ENCODE measurements at regions of chr4 and their contacts with region 1.

Region 1: DNA sequence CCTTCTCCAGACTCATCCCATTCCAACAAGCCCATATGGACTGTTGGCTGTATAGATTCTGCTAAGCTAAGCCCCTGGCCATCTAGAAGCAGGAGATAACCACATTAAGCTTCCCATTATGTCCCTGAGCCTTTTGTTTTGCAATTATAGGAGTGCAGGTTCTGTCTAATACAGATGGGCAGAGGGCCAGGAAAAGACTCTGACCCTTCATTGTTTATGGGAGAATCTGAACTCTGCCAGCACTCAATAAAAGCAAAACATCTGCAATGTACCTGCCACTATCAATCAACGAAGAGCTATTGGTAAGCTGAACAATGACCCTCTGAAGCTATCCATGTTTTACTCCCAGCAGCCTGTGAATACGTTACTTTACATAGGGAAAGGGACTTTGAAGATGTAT is 207.3 kb upstream of the CLNK start:
- DNase-seq: no peak
- ATAC-seq: no peak
- H3K4me3 ChIP-seq: no peak overlapping the region
- H3K4me3 Mint-ChIP-seq: no peak overlapping the region
- H3K27ac ChIP-seq: no peak overlapping the region
- H3K27ac Mint-ChIP-seq: no peak overlapping the region
- H3K4me1 ChIP-seq: no peaks in the 10 kb centered on the region
- H3K4me1 Mint-ChIP-seq: peaks cover 0 to 10% (median 3%) of the 10 kb centered on the region in 3 donors
- H3K27me3 ChIP-seq: no peaks in the 10 kb centered on the region
- H3K27me3 Mint-ChIP-seq: peaks cover 0 to 5% of the 10 kb centered on the region in 2 donors

Region 2: DNA sequence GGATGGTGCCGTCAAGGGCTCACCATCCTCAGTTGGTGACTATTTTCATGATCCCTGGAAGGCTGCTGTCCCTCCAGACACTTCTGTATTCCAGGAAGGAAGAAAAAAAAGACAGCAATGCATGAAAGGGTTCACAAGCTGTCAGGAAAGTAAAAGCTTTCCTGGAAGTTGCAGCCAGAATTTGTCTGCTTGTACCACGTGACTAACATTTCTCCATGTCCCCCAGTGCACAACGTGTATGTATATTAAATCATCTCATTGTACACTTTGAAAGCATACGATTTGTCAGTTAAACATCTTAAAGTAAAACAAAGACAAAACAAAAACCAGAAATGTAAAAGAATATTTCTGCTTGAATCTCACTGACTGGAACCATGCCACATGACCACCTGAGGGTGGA is 79.9 kb before region 1 on chr4:
- CTCF ChIA-PET with region 1: no interaction called
- POLR2A ChIA-PET with region 1: no interaction called
- DNase-seq: no peak
- ATAC-seq: no peak
- H3K4me3 ChIP-seq: no peak overlapping the region
- H3K4me3 Mint-ChIP-seq: no peak overlapping the region
- H3K27ac ChIP-seq: no peak overlapping the region
- H3K27ac Mint-ChIP-seq: no peak overlapping the region
- H3K4me1 ChIP-seq: no peaks in the 10 kb centered on the region
- H3K4me1 Mint-ChIP-seq: no peaks in the 10 kb centered on the region
- H3K27me3 ChIP-seq: no peaks in the 10 kb centered on the region
- H3K27me3 Mint-ChIP-seq: no peaks in the 10 kb centered on the region

Region 3: DNA sequence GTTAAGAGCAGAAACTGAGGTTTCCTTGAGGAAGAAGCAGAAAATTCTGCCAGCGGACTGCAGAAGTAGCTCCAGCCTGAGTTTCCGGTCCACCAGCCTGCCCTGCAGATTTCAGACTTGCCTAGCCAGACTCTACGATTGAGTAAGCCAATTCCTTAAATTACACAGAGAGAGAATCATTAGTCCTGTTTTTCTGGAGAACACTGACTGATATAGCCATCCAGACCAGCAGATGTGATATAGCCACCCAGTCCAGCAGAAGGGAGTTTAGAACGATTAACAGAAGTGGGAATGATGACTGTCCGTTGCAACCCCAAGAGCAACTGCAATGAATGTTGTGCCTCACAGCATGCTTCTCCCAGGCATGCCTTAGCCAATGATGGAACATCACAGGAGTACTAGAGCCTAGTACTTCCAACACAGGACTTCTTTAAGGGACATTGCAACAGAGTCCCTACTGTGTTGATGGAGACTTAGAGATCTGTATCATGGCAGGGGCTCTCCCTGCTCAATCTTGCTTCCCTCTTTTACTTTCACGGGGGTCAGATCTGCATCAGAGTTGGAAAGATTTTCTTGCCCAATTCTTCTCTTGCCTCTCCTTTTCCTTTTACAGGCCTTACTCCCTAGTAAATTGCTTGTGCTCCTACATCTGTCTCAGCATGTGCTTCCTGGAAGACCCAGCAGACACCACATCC is 57.3 kb after region 1 on chr4:
- CTCF ChIA-PET with region 1: no interaction called
- POLR2A ChIA-PET with region 1: interaction called in 1 of 2 experiments, 17 read pairs
- DNase-seq: no peak
- ATAC-seq: no peak
- H3K4me3 ChIP-seq: no peak overlapping the region
- H3K4me3 Mint-ChIP-seq: no peak overlapping the region
- H3K27ac ChIP-seq: no peak overlapping the region
- H3K27ac Mint-ChIP-seq: no peak overlapping the region
- H3K4me1 ChIP-seq: peaks cover 0 to 4% of the 10 kb centered on the region in 2 experiments
- H3K4me1 Mint-ChIP-seq: peaks cover 0 to 4% (median 0%) of the 10 kb centered on the region in 3 donors
- H3K27me3 ChIP-seq: no peaks in the 10 kb centered on the region
- H3K27me3 Mint-ChIP-seq: no peaks in the 10 kb centered on the region

Measured in T-cell (primary cell).